Gastrocnemius medialis (tissue), 4 donors: ENCODE measurements at regions of chr10 and their contacts with region 1.

Region 1: GRCh38 chr10:124992462-124993344 is 50.8 kb downstream of the ZRANB1 start:
- DNase-seq: peak in 1 of 2 donors; percentile 77
- ATAC-seq: peak; percentile 48 to 66
- H3K4me3 ChIP-seq: no peak overlapping the region
- H3K27ac ChIP-seq: peak overlapping the region; percentile 71 to 83 (median 78)
- H3K4me1 ChIP-seq: peaks cover 24 to 28% of the 10 kb centered on the region in 2 donors
- H3K27me3 ChIP-seq: no peaks in the 10 kb centered on the region
- CTCF ChIP-seq: peak; percentile 76 to 86 (median 84)
- POLR2A ChIP-seq: no peak

Region 2: DNA sequence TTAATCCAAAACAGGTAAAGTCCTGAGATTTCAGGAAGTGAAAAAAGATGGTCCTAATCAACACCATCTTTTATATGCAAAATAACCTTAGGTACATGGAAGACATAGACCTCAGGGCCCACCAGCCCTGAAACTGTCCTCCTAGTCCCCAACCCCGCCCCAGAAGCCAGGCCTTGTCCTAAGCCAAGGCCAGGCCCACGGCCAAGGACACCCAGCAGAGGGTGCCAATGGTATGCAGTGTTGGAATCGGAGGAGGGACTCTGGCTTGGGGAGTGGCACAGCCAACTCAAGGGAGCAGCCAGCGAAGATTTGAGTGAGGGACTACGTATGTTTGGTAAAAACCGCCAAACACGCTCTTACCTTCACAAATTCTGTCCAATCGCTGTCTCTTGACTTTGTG is 45.9 kb after region 1 on chr10:
- in situ Hi-C with region 1: no loop called
- intact Hi-C with region 1: loop called (anchors 5 kb)
- DNase-seq: peak; percentile 72 to 90
- ATAC-seq: peak; percentile 88
- H3K4me3 ChIP-seq: peak overlapping the region in 1 of 4 donors; percentile 9
- H3K27ac ChIP-seq: peak overlapping the region; percentile 67 to 76 (median 72)
- H3K4me1 ChIP-seq: peaks cover 68 to 74% of the 10 kb centered on the region in 2 donors
- H3K27me3 ChIP-seq: no peaks in the 10 kb centered on the region
- CTCF ChIP-seq: peak in 2 of 5 experiments; percentile 26 to 44
- POLR2A ChIP-seq: no peak

Region 3: GRCh38 chr10:125936331-125936730 is 943.6 kb after region 1 on chr10:
- in situ Hi-C with region 1: no loop called
- intact Hi-C with region 1: no loop called
- DNase-seq: no peak
- ATAC-seq: no peak
- H3K4me3 ChIP-seq: no peak overlapping the region
- H3K27ac ChIP-seq: no peak overlapping the region
- H3K4me1 ChIP-seq: no peaks in the 10 kb centered on the region
- H3K27me3 ChIP-seq: no peaks in the 10 kb centered on the region
- CTCF ChIP-seq: no peak
- POLR2A ChIP-seq: no peak